WTC11 (cell line): ENCODE measurements at regions of chr9 and their contacts with region 1.

Region 1: GRCh38 chr9:127930231-127931091 is at the start of gene PIP5KL1:
- DNase-seq: peak; percentile 95
- ATAC-seq: peak; percentile 62
- H3K4me3 Mint-ChIP-seq: peak within 1 kb of the TSS; percentile 65
- H3K27ac Mint-ChIP-seq: peak within 1 kb of the TSS; percentile 93
- H3K4me1 Mint-ChIP-seq: peaks cover 27% of the 10 kb centered on the region
- H3K27me3 Mint-ChIP-seq: peaks cover 29% of the 10 kb centered on the region
- CTCF ChIP-seq: no peak
- total RNA-seq, gene PIP5KL1: 15.8 to 20.2 TPM (median 16.8 TPM) in 3 replicates

Region 2: DNA sequence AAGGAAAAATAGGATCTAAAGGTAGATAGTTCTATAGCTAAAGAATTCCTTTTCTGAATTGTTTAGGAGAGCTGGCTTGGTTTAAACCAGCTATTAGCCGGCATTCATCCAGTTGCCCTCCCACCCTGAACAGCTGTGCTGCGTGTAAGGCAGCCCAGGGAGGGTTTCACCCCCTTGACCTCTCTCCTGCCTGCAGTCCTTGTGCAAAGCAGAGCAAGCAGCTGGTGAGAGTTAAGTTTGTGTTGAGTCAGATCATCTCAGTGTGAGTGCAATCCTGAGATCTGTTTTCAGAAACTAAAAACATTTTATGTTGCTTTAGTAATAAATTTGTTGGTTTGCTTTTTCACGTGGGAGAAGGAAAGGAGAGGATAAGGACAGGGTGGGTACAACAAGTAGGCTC is 150.6 kb after region 1 on chr9:
- CTCF ChIA-PET with region 1: no interaction called
- POLR2A ChIA-PET with region 1: interaction called, 11 read pairs
- DNase-seq: no peak
- ATAC-seq: no peak
- H3K4me3 Mint-ChIP-seq: no peak overlapping the region
- H3K27ac Mint-ChIP-seq: peak overlapping the region; percentile 89
- H3K4me1 Mint-ChIP-seq: peaks cover 32% of the 10 kb centered on the region
- H3K27me3 Mint-ChIP-seq: no peaks in the 10 kb centered on the region
- CTCF ChIP-seq: no peak